ENCODE measurements at regions of chr14 and their contacts with region 1.

Region 1: GRCh38 chr14:20855652-20856291 is 35.4 kb upstream of the RNASE3 start:
- DNase-seq: peak; percentile 75
- H3K4me3 Mint-ChIP-seq: no peak overlapping the region
- H3K27ac Mint-ChIP-seq: no peak overlapping the region
- H3K4me1 Mint-ChIP-seq: peaks cover 5% of the 10 kb centered on the region
- H3K27me3 Mint-ChIP-seq: peaks cover 47% of the 10 kb centered on the region
- CTCF ChIP-seq: peak; percentile 68

Region 2: DNA sequence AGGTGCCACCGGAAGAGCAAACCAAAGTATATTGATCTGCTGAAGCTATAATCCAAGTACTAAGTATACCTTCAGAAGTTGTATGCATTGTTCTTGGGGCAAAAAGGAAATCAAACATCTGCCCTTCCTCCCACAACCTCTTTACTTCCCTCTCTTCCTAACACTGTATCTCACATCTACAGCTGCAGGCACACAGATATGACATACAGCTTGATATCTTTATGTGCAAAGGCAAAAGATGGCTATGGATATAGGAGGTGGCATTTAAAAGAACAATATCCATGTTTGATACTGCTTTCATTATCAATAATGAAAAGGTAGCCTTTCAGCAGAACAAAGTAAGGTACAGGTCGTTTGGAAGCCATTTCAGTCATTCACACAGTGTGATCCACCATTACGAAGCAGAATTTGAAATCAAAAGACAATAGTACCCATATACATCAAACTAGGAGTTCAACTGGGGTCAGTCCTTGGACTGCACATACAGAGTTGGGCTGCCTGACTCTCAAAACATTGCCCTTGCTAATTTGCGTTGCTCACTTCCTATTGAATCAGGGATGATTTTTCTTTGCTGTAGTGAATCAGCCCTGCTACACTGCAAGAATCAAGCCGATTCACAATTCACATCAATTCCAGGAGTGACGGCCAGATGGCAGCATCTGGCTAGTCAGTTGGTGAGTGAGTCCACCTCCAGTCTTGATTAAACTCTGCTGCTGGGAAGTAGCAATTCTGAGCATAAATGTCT is 158.3 kb before region 1 on chr14:
- CTCF ChIA-PET with region 1: interaction called, 121 read pairs
- POLR2A ChIA-PET with region 1: interaction called, 4 read pairs
- intact Hi-C with region 1: loop called (anchors 1 kb)
- DNase-seq: peak; percentile 78
- H3K4me3 Mint-ChIP-seq: no peak overlapping the region
- H3K27ac Mint-ChIP-seq: no peak overlapping the region
- H3K4me1 Mint-ChIP-seq: no peaks in the 10 kb centered on the region
- H3K27me3 Mint-ChIP-seq: no peaks in the 10 kb centered on the region
- CTCF ChIP-seq: peak; percentile 73

Region 3: GRCh38 chr14:20712904-20713303 is 142.9 kb before region 1 on chr14:
- CTCF ChIA-PET with region 1: interaction called, 16 read pairs
- POLR2A ChIA-PET with region 1: no interaction called
- intact Hi-C with region 1: no loop called
- DNase-seq: no peak
- H3K4me3 Mint-ChIP-seq: no peak overlapping the region
- H3K27ac Mint-ChIP-seq: no peak overlapping the region
- H3K4me1 Mint-ChIP-seq: peaks cover 5% of the 10 kb centered on the region
- H3K27me3 Mint-ChIP-seq: no peaks in the 10 kb centered on the region
- CTCF ChIP-seq: no peak

Region 4: DNA sequence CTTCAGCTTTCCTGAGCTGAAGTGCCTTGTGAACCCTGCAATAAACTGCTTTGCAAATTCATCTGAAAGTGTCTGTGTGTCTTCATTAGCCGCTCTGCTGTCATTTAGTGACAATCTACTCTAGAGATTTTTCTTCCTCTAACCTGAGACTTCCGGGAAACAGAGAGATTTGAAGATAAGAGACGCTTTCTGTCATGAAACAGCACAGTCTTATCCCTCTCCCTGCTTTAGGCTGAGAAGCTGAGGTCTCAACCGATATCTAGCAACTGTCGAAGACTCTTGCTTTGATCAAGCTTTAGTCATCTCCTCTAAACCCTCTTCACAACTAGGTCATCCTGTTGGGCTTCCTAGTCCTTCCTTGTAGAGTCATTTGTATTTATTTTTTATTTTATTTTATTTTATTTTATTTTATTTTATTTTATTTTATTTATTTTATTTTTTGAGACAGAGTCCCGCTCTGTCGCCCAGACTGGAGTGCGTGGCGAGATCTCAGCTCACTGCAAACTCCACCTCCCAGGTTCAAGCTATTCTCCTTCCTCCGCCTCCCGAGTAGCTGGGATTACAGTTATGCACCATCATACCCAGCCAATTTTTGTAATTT is 100.7 kb after region 1 on chr14:
- CTCF ChIA-PET with region 1: interaction called, 15 read pairs
- POLR2A ChIA-PET with region 1: no interaction called
- intact Hi-C with region 1: no loop called
- DNase-seq: no peak
- H3K4me3 Mint-ChIP-seq: no peak overlapping the region
- H3K27ac Mint-ChIP-seq: no peak overlapping the region
- H3K4me1 Mint-ChIP-seq: peaks cover 12% of the 10 kb centered on the region
- H3K27me3 Mint-ChIP-seq: peaks cover 64% of the 10 kb centered on the region
- CTCF ChIP-seq: no peak

Region 5: GRCh38 chr14:20998664-20999366 is 143.0 kb after region 1 on chr14 and contains the start of gene SLC39A2:
- CTCF ChIA-PET with region 1: interaction called, 19 read pairs
- POLR2A ChIA-PET with region 1: no interaction called
- intact Hi-C with region 1: no loop called
- DNase-seq: peak; percentile 83
- H3K4me3 Mint-ChIP-seq: peak within 1 kb of the TSS; percentile 8
- H3K27ac Mint-ChIP-seq: peak within 1 kb of the TSS; percentile 73
- H3K4me1 Mint-ChIP-seq: peaks cover 18% of the 10 kb centered on the region
- H3K27me3 Mint-ChIP-seq: no peaks in the 10 kb centered on the region
- CTCF ChIP-seq: no peak
- total RNA-seq, gene SLC39A2: not detected in 2 replicates

Region 6: DNA sequence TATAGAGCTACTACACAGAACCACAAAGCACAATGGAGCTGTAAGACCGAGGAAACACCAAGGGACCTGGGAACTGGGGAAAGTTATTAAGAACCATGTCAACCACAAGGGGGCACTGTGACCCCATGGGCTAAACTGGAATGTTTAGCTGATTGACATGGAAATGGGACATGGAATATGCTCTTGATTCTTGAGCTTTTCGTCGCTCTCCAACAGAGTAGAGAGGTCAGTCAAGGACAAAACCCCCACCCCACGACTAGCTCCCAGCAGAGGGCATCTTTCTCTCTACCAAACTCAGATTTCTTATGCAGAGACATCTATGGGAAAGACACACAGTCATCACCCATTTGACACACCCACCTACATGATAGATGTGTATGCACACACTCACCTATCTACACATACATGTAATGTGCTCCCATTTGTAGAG is 159.0 kb after region 1 on chr14:
- CTCF ChIA-PET with region 1: interaction called, 10 read pairs
- POLR2A ChIA-PET with region 1: interaction called, 3 read pairs
- intact Hi-C with region 1: no loop called
- DNase-seq: peak; percentile 88
- H3K4me3 Mint-ChIP-seq: no peak overlapping the region
- H3K27ac Mint-ChIP-seq: no peak overlapping the region
- H3K4me1 Mint-ChIP-seq: peaks cover 7% of the 10 kb centered on the region
- H3K27me3 Mint-ChIP-seq: peaks cover 33% of the 10 kb centered on the region
- CTCF ChIP-seq: peak; percentile 90

Measured in MCF 10A (cell line).